ENCODE measurements at regions of chr3 and their contacts with region 1.

Region 1: GRCh38 chr3:141452036-141452435 is 34.8 kb upstream of the RASA2 start:
- DNase-seq: peak; percentile 70
- H3K4me3 ChIP-seq: no peak overlapping the region
- H3K27ac ChIP-seq: no peak overlapping the region
- H3K4me1 ChIP-seq: no peaks in the 10 kb centered on the region
- H3K27me3 ChIP-seq: no peaks in the 10 kb centered on the region
- CTCF ChIP-seq: peak; percentile 61

Region 2: GRCh38 chr3:141303481-141304223 is 148.4 kb before region 1 on chr3:
- CTCF ChIA-PET with region 1: interaction called, 7 read pairs
- POLR2A ChIA-PET with region 1: no interaction called
- intact Hi-C with region 1: loop called (anchors 2 kb)
- DNase-seq: peak; percentile 87
- H3K4me3 ChIP-seq: no peak overlapping the region
- H3K27ac ChIP-seq: no peak overlapping the region
- H3K4me1 ChIP-seq: no peaks in the 10 kb centered on the region
- H3K27me3 ChIP-seq: no peaks in the 10 kb centered on the region
- CTCF ChIP-seq: peak; percentile 84

Region 3: DNA sequence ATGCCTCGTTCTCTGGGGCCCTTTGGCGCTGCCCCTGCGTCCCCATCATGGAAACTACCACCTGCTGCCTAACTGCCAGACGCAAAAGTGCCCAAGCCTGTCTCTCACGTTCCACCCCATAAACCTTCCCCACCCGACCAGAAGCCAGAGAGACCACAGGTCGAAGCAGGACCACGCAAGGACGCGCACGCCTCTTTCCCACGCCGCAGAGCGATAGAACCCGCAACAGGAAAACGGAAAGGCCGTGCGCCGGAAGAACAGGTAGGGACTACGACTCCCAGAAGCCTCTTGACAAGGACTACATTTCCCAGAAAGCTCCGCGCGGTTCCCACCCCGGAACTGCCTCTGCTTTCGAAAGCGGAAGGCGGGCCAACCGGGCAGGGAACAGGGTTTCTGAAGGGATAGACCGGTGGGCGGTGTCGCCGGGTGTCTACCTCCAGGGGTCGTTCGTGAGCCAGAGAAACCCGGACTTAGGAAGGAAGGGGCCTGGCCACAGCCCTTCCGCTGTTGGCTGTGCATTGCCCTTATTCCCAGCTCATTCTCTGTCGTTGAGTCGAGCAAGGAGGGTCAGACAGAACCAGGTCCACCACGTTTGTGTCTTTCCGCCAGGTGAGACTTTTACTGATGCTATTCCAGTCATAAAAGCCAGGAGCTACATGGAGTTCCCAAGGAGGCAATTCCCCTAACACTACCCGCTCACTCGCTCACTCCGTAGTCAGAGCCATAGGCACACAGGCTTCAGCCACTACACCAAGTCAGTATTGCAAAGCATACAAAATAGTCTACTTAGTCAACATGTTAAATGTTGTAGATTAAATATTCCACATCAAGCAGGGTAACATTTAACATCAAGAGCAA is 140.3 kb before region 1 on chr3:
- CTCF ChIA-PET with region 1: interaction called, 21 read pairs
- POLR2A ChIA-PET with region 1: no interaction called
- intact Hi-C with region 1: loop called (anchors 2 kb)
- DNase-seq: peak; percentile 98
- H3K4me3 ChIP-seq: peak overlapping the region; percentile 65
- H3K27ac ChIP-seq: peak overlapping the region; percentile 65
- H3K4me1 ChIP-seq: no peaks in the 10 kb centered on the region
- H3K27me3 ChIP-seq: no peaks in the 10 kb centered on the region
- CTCF ChIP-seq: peak; percentile 82

Region 4: DNA sequence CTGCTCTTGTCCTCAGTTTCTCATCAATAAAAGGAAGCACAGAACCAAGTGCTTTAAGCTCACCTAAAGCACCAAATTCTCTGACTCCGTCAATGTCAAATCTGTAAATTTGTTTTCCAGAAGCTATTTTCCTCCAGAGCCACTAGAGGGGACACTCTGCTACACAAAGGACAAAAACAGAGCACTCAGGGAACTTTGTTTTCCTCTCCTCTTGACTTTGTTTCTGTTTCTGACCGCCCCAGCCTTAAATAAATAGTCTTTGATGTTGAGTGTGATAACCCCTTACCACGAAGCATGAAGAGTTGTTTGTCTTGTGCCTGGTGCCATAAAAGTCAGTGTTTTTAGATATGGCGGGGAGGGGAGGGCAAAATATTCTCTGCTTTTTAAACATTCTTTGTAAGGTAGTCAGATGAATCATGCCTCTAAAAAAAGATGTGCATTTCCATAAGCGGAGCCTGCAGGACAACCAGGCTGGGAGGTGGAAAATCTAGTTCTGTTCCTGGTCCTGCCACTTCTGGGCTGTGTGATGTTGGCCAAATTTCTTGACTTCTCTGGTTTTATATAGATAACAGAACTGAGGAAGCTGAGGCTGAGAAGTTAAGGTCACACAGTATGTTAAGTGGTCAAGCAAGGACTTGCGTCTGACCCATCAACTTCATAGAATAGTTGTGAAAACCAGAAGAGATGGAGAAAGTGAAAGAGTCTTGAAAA is 91.0 kb before region 1 on chr3:
- CTCF ChIA-PET with region 1: interaction called, 11 read pairs
- POLR2A ChIA-PET with region 1: no interaction called
- intact Hi-C with region 1: loop called (anchors 1 kb)
- DNase-seq: peak; percentile 76
- H3K4me3 ChIP-seq: peak overlapping the region; percentile 15
- H3K27ac ChIP-seq: no peak overlapping the region
- H3K4me1 ChIP-seq: no peaks in the 10 kb centered on the region
- H3K27me3 ChIP-seq: no peaks in the 10 kb centered on the region
- CTCF ChIP-seq: peak; percentile 83

Region 5: GRCh38 chr3:141413801-141414689 is 38.0 kb before region 1 on chr3:
- CTCF ChIA-PET with region 1: no interaction called
- POLR2A ChIA-PET with region 1: no interaction called
- intact Hi-C with region 1: no loop called
- DNase-seq: peak; percentile 18
- H3K4me3 ChIP-seq: no peak overlapping the region
- H3K27ac ChIP-seq: no peak overlapping the region
- H3K4me1 ChIP-seq: peaks cover 41% of the 10 kb centered on the region
- H3K27me3 ChIP-seq: no peaks in the 10 kb centered on the region
- CTCF ChIP-seq: no peak